ENCODE measurements at regions of chr15 and their contacts with region 1.

Region 1: DNA sequence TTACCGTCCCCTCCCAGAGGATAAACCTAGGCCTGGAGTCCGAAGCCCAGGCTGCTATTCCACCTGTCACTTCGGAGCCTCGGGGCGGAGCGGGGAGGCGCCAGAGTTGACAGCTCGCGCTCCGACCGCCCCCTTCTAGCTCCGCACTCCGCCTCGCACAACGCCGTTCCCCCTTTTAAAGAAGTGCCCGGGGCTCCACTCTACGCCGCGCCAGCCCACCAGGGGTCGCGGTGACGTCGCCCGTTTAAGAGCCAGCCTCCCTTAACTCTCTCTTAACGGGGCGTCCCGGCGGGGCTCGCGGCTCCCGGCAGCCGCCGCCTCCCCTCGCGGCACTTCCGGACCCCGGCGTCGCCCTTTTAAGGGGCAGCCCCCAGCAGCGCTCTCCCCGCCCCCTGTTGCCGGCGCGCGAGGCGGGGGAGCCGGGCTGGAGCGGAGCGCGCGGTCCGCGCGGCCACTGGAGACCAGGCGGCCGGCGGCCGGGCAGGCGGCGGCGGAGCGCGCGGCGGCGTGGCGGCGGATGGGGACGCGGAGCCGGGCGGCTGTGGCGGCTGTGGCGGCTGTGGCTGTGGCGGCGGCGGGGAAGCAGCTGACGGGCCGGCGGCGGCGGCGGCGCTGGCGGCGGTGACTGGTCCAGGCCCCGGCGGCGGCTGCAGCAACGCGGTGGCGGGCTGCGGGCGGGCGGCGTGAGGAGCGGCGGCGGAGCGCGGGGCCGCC is at the start of gene INAFM2:
- DNase-seq: peak; percentile 92
- ATAC-seq: peak; percentile 85
- H3K4me3 ChIP-seq: peak within 1 kb of the TSS; percentile 89
- H3K27ac ChIP-seq: peak within 1 kb of the TSS; percentile 74; the same call in 1 of the 2 replicates
- H3K4me1 ChIP-seq: peaks cover 24% of the 10 kb centered on the region
- H3K27me3 ChIP-seq: peaks cover 2% of the 10 kb centered on the region
- CTCF ChIP-seq: peak; percentile 74
- POLR2A ChIP-seq: peak; percentile 65
- RAD21 ChIP-seq: peak; percentile 51
- total RNA-seq, gene INAFM2: 10.4 and 13.1 TPM in 2 replicates

Region 2: DNA sequence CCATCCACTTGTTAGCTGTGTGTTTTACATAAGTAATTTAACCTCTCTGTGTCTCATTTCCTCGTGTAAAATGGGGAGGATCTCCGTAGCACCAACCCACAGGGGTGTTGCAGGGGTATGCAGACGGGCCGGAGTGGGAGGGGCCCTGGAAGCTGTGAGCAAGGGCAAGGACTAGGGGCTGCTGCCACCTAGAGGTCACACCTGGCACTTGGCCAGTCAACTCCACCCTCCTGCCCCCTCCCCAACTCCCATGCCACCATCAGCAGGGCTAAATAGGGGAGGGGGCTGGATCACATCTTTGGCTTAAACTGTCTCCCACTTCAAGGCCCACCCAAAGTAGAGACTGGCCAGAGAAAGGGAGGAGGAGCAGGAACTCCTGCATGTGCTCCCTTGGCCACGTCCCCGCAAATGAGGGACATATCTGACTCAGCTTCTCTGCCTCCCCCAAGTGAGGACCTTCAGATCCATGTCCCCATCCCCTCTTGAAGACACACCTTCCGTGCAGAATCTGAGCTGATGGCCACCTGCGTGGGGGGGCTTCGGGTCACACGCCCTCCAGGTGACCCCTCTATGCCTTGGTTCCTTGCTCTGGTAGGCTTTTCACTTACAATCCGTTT is 14.8 kb after region 1 on chr15:
- CTCF ChIA-PET with region 1: interaction called, 18 read pairs
- POLR2A ChIA-PET with region 1: interaction called, 20 read pairs
- dilution Hi-C with region 1: no loop called
- in situ Hi-C with region 1: no loop called
- intact Hi-C with region 1: no loop called
- DNase-seq: peak; percentile 60
- ATAC-seq: peak; percentile 8; the same call in 1 of the 2 replicates
- H3K4me3 ChIP-seq: no peak overlapping the region
- H3K27ac ChIP-seq: peak overlapping the region; percentile 97
- H3K4me1 ChIP-seq: peaks cover 36% of the 10 kb centered on the region
- H3K27me3 ChIP-seq: no peaks in the 10 kb centered on the region
- CTCF ChIP-seq: peak; percentile 69
- POLR2A ChIP-seq: no peak
- RAD21 ChIP-seq: peak; percentile 76

Region 3: DNA sequence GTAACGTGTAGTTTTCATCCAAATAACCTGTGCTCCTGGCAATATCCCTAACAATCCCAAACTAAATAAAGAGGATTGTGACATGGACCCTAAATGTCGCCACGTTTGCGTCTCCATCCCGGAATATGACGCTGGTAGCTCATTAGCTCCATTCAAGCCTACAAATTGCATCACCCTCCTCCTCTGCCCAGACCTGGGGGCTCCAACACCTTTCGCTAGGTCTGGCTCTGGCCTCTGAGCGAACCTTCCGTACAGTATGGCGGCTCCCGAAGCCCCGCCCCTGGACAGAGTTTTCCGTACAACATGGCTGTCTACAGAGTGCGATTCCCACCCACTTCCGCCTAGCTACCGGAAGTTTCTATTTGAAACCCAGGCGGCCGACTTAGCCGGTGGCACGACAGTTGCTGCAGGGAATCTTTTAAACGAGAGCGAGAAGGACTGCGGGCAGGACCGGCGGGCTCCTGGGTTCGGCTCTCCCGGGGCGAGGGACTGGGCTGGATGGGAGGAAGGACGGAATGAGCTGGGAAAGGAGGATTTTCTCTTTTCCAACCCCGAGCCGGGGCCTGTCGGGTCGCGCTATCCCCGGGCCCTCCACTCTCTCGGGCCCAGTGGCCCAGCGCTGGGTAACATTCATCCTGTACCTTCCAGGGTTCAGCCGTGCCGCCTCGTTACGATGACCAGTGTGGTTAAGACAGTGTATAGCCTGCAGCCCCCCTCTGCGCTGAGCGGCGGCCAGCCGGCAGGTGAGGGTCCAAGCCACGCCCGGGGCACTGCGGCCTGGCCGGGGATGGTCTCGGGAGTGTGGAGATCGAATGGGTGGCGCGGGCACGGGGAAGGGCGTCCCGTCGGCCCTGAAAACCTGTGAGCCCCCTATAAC is 59.4 kb after region 1 on chr15 and contains the start of gene KNSTRN:
- CTCF ChIA-PET with region 1: no interaction called
- POLR2A ChIA-PET with region 1: interaction called, 9 read pairs
- dilution Hi-C with region 1: no loop called
- in situ Hi-C with region 1: no loop called
- intact Hi-C with region 1: loop called (anchors 2 kb)
- DNase-seq: peak; percentile 93
- ATAC-seq: peak; percentile 91
- H3K4me3 ChIP-seq: peak within 1 kb of the TSS; percentile 76
- H3K27ac ChIP-seq: peak within 1 kb of the TSS; percentile 76
- H3K4me1 ChIP-seq: peaks cover 4% of the 10 kb centered on the region
- H3K27me3 ChIP-seq: no peaks in the 10 kb centered on the region
- CTCF ChIP-seq: no peak
- POLR2A ChIP-seq: peak; percentile 62; the same call in 1 of the 2 replicates
- RAD21 ChIP-seq: no peak
- total RNA-seq, gene KNSTRN: 73.5 and 73.6 TPM in 2 replicates

Region 4: DNA sequence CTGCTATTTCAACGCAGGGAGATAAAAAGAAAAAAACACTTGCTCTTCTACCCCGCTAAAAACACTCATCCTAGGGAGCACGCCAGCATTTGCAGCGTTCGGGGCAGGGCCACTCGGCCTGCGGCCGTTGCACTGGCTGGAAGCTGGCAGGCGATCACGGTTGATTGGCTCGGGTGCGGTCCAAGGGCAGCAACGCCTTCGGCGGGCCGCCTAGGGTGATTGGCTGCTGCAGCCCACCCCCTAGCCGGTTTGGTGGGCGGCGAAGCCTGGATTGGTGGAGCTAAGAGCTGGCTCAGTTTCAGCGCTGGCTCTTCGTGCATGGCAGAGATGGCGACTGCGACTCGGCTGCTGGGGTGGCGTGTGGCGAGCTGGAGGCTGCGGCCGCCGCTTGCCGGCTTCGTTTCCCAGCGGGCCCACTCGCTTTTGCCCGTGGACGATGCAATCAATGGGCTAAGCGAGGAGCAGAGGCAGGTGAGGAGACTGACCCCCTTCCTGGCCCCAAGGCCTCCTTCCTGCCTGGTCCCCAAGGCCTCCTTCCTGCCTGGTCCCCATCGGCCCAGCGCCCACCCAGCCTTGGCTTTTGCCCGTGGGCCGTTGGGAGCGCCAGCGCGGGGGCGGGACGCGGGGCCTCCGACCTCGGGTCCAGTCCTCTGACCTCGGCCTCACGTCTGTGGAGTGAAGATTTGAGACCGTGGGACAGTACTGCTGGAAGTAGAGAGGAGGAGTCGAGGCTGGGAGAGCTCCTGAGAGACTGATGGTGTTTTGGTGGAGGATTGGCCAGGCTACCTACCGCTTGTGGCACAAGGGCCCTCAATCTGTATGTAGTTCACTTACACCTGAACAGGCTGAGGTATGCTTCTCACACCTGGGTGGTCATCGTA is 82.3 kb after region 1 on chr15 and contains the start of gene IVD:
- CTCF ChIA-PET with region 1: no interaction called
- POLR2A ChIA-PET with region 1: interaction called, 3 read pairs
- dilution Hi-C with region 1: no loop called
- in situ Hi-C with region 1: no loop called
- intact Hi-C with region 1: loop called (anchors 5 kb)
- DNase-seq: peak; percentile 96
- ATAC-seq: peak; percentile 100
- H3K4me3 ChIP-seq: peak within 1 kb of the TSS; percentile 71
- H3K27ac ChIP-seq: peak within 1 kb of the TSS; percentile 71
- H3K4me1 ChIP-seq: peaks cover 3% of the 10 kb centered on the region
- H3K27me3 ChIP-seq: no peaks in the 10 kb centered on the region
- CTCF ChIP-seq: no peak
- POLR2A ChIP-seq: peak; percentile 59; the same call in 1 of the 2 replicates
- RAD21 ChIP-seq: no peak
- total RNA-seq, gene IVD: 27.5 and 31.7 TPM in 2 replicates

Region 5: DNA sequence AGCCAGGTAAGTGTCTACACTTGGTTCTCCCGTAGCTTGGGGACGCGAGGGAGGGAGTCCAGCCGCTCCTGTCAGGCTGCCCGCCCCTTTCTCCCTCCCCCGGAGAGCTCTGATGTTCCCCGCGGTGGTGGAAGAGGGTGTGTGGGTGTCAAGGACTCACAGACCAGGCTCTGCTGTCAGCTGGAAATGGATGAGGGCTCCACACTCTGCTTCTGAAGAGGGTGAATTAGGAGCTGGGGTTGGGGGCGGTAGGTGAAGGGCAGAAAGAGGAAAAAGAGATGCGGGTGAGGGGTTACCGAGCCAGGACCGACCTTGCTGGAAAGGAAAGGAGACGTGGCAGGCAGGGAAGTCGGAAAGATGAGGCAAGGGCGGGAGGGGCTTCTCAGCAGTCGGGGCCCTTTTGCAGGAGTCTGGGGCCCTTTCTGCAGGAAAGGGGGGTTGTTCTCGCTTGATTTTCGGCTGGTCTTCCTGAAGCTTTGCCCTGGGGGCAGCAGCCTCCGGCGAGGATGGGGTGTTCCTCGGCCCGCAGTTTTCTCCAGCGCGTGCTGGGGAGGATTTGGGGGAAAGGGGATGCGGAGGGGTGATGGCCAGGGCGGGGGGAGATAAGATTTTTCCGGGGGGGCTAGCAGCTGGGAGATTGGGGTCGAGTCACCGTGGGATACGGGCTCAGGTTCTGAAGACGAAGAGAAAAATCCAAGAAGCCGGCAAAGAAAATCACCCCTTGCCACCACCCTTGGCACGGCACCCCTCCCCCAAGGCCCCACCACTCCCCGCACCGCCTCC is 116.8 kb after region 1 on chr15:
- CTCF ChIA-PET with region 1: no interaction called
- POLR2A ChIA-PET with region 1: no interaction called
- dilution Hi-C with region 1: no loop called
- in situ Hi-C with region 1: no loop called
- intact Hi-C with region 1: no loop called
- DNase-seq: peak; percentile 26
- ATAC-seq: 0 out of 2 replicates have a peak, but pooled peaks have one; percentile 4
- H3K4me3 ChIP-seq: peak overlapping the region; percentile 49
- H3K27ac ChIP-seq: no peak overlapping the region; the same call in 1 of the 2 replicates
- H3K4me1 ChIP-seq: peaks cover 21% of the 10 kb centered on the region
- H3K27me3 ChIP-seq: peaks cover 51% of the 10 kb centered on the region
- CTCF ChIP-seq: no peak
- POLR2A ChIP-seq: no peak
- RAD21 ChIP-seq: no peak

Region 6: GRCh38 chr15:40593588-40594428 is 270.4 kb after region 1 on chr15 and contains the start of gene KNL1:
- CTCF ChIA-PET with region 1: interaction called, 13 read pairs
- POLR2A ChIA-PET with region 1: no interaction called
- dilution Hi-C with region 1: no loop called
- in situ Hi-C with region 1: no loop called
- intact Hi-C with region 1: no loop called
- DNase-seq: peak; percentile 90
- ATAC-seq: peak; percentile 89
- H3K4me3 ChIP-seq: peak within 1 kb of the TSS; percentile 52
- H3K27ac ChIP-seq: peak within 1 kb of the TSS; percentile 83
- H3K4me1 ChIP-seq: no peaks in the 10 kb centered on the region
- H3K27me3 ChIP-seq: no peaks in the 10 kb centered on the region
- CTCF ChIP-seq: no peak
- POLR2A ChIP-seq: peak; percentile 47
- RAD21 ChIP-seq: no peak
- total RNA-seq, gene KNL1: 25.1 and 32.5 TPM in 2 replicates